ENCODE measurements at regions of chr11 and their contacts with region 1.

Region 1: DNA sequence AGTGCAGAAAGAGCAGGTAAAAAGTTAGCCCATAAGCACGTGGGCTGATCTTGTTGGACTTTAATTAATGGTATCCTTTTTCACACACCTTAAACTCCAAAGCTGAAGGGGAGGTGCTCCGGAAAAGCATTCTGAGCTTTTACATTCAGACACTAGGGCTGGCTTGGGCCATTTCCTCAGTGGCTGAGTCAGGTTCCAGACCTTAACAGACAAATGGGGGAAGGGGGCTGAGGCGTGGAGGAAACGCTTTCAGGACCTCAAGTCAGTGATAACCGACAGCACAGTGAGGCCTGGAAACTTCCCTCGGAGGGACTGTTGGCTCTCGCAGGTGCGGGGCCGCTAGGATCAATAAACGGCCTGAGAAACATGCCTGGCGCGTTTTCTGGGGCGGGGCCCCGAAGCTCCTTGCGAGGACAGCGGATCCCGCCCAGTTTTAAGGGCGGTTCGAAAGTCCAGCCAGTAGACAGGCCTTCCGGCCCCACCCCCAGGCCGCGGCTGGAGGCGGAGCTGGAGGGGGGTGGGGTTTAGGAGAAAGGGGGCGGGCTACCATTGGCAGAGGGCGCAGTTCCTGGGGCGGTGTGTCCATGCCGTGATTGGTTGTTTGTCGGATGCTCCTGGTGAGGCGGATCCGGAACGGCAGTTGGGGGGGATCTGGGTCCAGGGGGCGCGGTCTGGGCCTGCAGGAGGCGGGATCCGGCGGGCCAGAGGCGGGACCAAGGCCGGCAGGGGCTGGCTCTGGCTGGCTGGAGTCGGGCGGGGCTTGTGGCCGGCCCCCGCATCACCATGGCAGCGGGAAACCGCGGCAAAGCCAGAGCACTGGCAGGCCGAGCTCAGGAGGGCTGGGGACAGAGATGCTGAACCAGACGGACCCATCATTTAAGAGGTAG is 8.0 kb downstream of the C11orf52 start:
- DNase-seq: peak; percentile 99
- H3K4me3 Mint-ChIP-seq: peak overlapping the region; percentile 91
- H3K27ac Mint-ChIP-seq: peak overlapping the region; percentile 89
- H3K4me1 Mint-ChIP-seq: peaks cover 13% of the 10 kb centered on the region
- H3K27me3 Mint-ChIP-seq: peaks cover 7% of the 10 kb centered on the region

Region 2: GRCh38 chr11:111766093-111766833 is 160.5 kb before region 1 on chr11 and contains the start of gene PPP2R1B:
- intact Hi-C with region 1: loop called (anchors 1 kb)
- DNase-seq: peak; percentile 91
- H3K4me3 Mint-ChIP-seq: peak within 1 kb of the TSS; percentile 85
- H3K27ac Mint-ChIP-seq: peak within 1 kb of the TSS; percentile 98
- H3K4me1 Mint-ChIP-seq: peaks cover 31% of the 10 kb centered on the region
- H3K27me3 Mint-ChIP-seq: no peaks in the 10 kb centered on the region
- total RNA-seq, gene PPP2R1B: 63.2 and 63.6 TPM in 2 replicates

Region 3: DNA sequence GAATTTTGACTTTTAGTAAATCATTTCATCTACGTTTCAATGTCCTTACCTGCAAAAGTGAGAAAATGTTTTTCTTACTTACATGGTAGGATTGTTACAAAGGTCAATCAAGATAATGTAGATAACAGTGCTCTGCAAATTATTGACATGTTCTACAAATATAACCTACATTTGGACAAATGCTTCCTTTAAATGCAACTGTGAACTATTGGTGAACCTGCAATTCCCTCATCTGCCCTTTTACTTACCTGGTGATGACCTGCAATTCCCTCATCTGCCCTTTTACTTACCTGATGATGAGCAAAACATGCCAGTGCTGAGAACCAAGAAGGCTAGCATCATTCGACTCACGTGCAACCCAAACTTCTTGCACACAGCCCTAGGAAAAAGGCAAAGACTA is 66.5 kb before region 1 on chr11:
- intact Hi-C with region 1: no loop called
- DNase-seq: no peak
- H3K4me3 Mint-ChIP-seq: no peak overlapping the region
- H3K27ac Mint-ChIP-seq: no peak overlapping the region
- H3K4me1 Mint-ChIP-seq: no peaks in the 10 kb centered on the region
- H3K27me3 Mint-ChIP-seq: no peaks in the 10 kb centered on the region

Region 4: DNA sequence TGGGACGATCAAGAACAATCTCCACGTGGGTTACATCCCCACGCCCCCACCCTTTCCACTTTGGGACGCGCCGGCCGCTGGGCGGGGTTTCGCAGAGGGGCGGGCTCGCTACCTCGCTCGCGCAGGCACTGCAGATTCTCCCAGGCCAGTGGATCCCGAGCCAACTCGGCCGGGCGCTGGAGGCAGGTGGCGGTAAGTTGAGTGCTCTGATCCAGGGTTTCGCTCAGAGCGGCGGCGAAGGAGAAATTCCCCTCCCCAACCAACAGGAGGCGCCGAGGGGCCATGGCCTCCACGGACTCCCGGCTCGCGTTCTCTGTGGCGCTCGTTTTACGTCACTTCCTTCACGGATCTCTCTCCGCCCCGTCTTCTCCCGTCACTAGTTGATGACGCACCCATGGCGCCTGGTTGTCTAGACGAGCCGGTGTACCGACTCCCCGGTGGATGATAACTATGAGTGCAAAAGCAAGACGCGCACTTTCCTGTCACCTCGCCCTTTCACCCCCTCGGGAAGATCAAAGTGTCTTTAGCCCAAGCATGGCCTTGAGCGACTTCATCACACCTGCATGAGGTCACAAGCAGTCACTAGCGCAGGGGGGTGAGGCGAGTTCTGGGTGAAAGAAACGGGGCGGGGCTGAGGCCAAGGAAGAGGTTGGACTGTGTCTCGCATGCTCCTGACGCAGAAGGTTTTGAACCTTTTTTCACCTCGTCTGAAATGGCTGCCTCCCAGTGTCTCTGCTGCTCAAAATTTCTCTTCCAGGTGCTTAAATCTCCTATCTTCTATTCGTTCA is 47.7 kb before region 1 on chr11 and contains the starts of genes CFAP68 and FDXACB1:
- intact Hi-C with region 1: loop called (anchors 1 kb)
- DNase-seq: peak; percentile 98
- H3K4me3 Mint-ChIP-seq: peak within 1 kb of the TSS; percentile 95
- H3K27ac Mint-ChIP-seq: peak within 1 kb of the TSS; percentile 99
- H3K4me1 Mint-ChIP-seq: peaks cover 10% of the 10 kb centered on the region
- H3K27me3 Mint-ChIP-seq: no peaks in the 10 kb centered on the region
- total RNA-seq, gene CFAP68: 22.6 and 25.5 TPM in 2 replicates
- total RNA-seq, gene FDXACB1: 8.8 and 10.0 TPM in 2 replicates

Region 5: GRCh38 chr11:112024773-112025678 is 98.3 kb after region 1 on chr11 and contains the start of gene DLAT:
- intact Hi-C with region 1: loop called (anchors 1 kb)
- DNase-seq: peak; percentile 96
- H3K4me3 Mint-ChIP-seq: peak within 1 kb of the TSS; percentile 100
- H3K27ac Mint-ChIP-seq: peak within 1 kb of the TSS; percentile 100
- H3K4me1 Mint-ChIP-seq: peaks cover 16% of the 10 kb centered on the region
- H3K27me3 Mint-ChIP-seq: no peaks in the 10 kb centered on the region
- total RNA-seq, gene DLAT: 59.2 and 61.8 TPM in 2 replicates

Region 6: GRCh38 chr11:112086422-112087191 is 159.9 kb after region 1 on chr11 and contains the starts of genes SDHD and TIMM8B:
- intact Hi-C with region 1: loop called (anchors 1 kb)
- DNase-seq: peak; percentile 99
- H3K4me3 Mint-ChIP-seq: peak within 1 kb of the TSS; percentile 100
- H3K27ac Mint-ChIP-seq: peak within 1 kb of the TSS; percentile 99
- H3K4me1 Mint-ChIP-seq: peaks cover 52% of the 10 kb centered on the region
- H3K27me3 Mint-ChIP-seq: peaks cover 2% of the 10 kb centered on the region
- total RNA-seq, gene SDHD: 95.2 and 101 TPM in 2 replicates
- total RNA-seq, gene TIMM8B: 86.3 and 89.7 TPM in 2 replicates

Region 7: GRCh38 chr11:112280268-112281126 is 353.7 kb after region 1 on chr11:
- intact Hi-C with region 1: no loop called
- DNase-seq: peak; percentile 91
- H3K4me3 Mint-ChIP-seq: peak overlapping the region; percentile 97
- H3K27ac Mint-ChIP-seq: peak overlapping the region; percentile 61
- H3K4me1 Mint-ChIP-seq: peaks cover 33% of the 10 kb centered on the region
- H3K27me3 Mint-ChIP-seq: peaks cover 1% of the 10 kb centered on the region